ENCODE measurements at regions of chr1 and their contacts with region 1.

Region 1: DNA sequence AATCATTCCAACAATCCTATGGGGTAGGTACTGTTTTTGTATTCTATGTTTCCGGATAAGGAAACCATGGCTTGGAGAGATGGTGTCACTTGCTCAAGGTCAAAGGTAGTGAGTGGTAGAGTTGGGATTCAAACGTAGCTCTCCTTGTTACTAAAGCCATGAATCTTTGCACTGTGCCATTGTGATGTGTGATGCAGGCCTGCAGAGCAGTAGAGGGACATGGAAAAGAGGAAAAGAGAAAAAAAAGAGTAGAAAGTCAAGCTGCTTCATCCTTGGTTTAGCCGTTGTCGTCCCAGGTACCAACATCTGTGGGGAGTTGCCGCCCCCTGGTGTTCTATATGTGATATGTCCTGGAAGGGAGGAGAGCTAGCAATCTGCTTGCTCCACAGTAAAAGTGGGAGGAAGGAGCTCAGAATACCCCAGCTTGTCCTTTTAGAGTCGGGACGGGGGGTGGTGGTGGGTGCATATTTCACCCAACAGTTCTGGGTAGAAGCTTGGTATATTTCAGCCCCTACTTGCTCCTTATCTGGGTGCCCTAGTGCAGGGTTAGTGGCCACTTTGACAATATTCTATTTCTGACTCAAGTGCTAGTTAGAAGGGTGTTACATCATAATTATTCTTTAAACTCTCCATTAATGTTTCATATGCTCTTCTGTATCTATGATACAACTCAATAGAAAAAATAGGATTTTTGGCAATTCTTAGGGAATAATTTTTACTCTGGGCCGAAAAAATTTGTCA is 98.4 kb downstream of the EBNA1BP2 start:
- DNase-seq: peak; percentile 84 to 90 (median 85)
- ATAC-seq: peak; percentile 94
- H3K4me3 ChIP-seq: no peak overlapping the region
- H3K27ac ChIP-seq: no peak overlapping the region; the same call in 2 of the 3 replicates
- H3K4me1 ChIP-seq: peaks cover 15 to 23% of the 10 kb centered on the region in 2 experiments; a peak in 4 of 5 replicates
- H3K27me3 ChIP-seq: no peaks in the 10 kb centered on the region
- CTCF ChIP-seq: peak; percentile 90 to 96 (median 94)
- EP300 ChIP-seq: no peak
- POLR2A ChIP-seq: no peak
- RAD21 ChIP-seq: peak; percentile 99 to 100

Region 2: GRCh38 chr1:42518908-42519307 is 554.8 kb before region 1 on chr1:
- CTCF ChIA-PET with region 1: no interaction called
- POLR2A ChIA-PET with region 1: no interaction called
- in situ Hi-C with region 1: no loop called
- intact Hi-C with region 1: loop called (anchors 10 kb)
- DNase-seq: no peak
- ATAC-seq: no peak
- H3K4me3 ChIP-seq: no peak overlapping the region
- H3K27ac ChIP-seq: no peak overlapping the region
- H3K4me1 ChIP-seq: no peaks in the 10 kb centered on the region
- H3K27me3 ChIP-seq: no peaks in the 10 kb centered on the region
- CTCF ChIP-seq: no peak
- EP300 ChIP-seq: no peak
- POLR2A ChIP-seq: no peak
- RAD21 ChIP-seq: no peak

Region 3: DNA sequence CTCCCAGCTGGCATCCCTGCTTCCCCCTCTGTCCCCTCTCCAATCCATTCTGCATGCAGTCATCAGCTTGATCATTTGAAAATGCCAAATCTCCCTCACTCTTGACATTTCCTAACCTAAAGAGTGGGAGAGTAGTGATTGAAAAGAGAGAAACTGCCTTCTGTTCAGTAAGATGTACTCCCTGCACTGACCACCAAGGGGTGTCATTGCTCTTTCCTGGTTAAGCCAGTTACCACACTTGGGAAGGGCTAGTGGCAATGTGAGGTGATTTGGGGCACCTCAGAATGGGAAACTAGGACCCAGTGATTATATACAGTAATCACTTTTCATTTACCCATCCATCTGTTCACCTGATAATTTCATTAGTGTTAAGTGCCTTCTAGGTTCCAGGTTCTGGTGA is 295.8 kb before region 1 on chr1:
- CTCF ChIA-PET with region 1: interaction called, 65 read pairs
- POLR2A ChIA-PET with region 1: interaction called, 27 read pairs
- in situ Hi-C with region 1: loop called (anchors 5 kb)
- intact Hi-C with region 1: loop called (anchors 1 kb)
- DNase-seq: peak; percentile 75 to 80 (median 76)
- ATAC-seq: peak; percentile 94
- H3K4me3 ChIP-seq: no peak overlapping the region
- H3K27ac ChIP-seq: no peak overlapping the region
- H3K4me1 ChIP-seq: no peaks in the 10 kb centered on the region; a peak in 1 of 5 replicates
- H3K27me3 ChIP-seq: no peaks in the 10 kb centered on the region
- CTCF ChIP-seq: peak; percentile 84 to 94 (median 94)
- EP300 ChIP-seq: no peak
- POLR2A ChIP-seq: no peak
- RAD21 ChIP-seq: peak; percentile 92 to 97

Region 4: GRCh38 chr1:42913426-42914091 is 160.1 kb before region 1 on chr1:
- CTCF ChIA-PET with region 1: interaction called, 35 read pairs
- POLR2A ChIA-PET with region 1: interaction called, 10 read pairs
- in situ Hi-C with region 1: no loop called
- intact Hi-C with region 1: loop called (anchors 1 kb)
- DNase-seq: peak; percentile 66 to 86 (median 69)
- ATAC-seq: peak; percentile 96
- H3K4me3 ChIP-seq: no peak overlapping the region
- H3K27ac ChIP-seq: no peak overlapping the region
- H3K4me1 ChIP-seq: peaks cover 0 to 7% of the 10 kb centered on the region in 2 experiments; a peak in 1 of 5 replicates
- H3K27me3 ChIP-seq: no peaks in the 10 kb centered on the region
- CTCF ChIP-seq: peak; percentile 67 to 85 (median 83)
- EP300 ChIP-seq: no peak
- POLR2A ChIP-seq: no peak
- RAD21 ChIP-seq: peak; percentile 83 to 99

Region 5: DNA sequence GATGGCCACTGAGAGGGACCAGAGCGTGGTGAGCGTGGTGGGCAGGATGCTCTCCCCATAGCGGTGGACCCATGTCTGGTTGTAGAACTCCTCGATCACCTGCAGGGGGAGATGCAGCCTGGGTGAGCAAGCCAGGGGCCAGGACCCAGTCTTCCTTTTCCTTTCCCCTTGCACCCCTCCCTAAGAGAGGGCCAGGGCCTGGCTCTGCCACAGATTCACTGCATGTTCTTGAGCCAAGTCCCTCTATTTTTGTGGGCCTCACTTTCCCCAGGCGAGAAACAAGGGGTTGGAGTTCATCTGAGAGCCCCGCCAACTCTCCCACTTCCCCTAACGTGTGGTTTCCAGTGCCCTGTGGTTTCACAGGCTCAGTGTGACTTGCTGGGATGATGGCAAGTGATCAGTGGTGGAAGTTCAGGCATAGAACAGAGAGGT is 142.5 kb before region 1 on chr1:
- CTCF ChIA-PET with region 1: interaction called, 32 read pairs
- POLR2A ChIA-PET with region 1: interaction called, 12 read pairs
- in situ Hi-C with region 1: no loop called
- intact Hi-C with region 1: no loop called
- DNase-seq: peak; percentile 76 to 83 (median 76)
- ATAC-seq: peak; percentile 85
- H3K4me3 ChIP-seq: no peak overlapping the region
- H3K27ac ChIP-seq: peak overlapping the region; percentile 53; the same call in 1 of the 3 replicates
- H3K4me1 ChIP-seq: peaks cover 60 to 79% of the 10 kb centered on the region in 2 experiments
- H3K27me3 ChIP-seq: no peaks in the 10 kb centered on the region
- CTCF ChIP-seq: peak; percentile 71 to 81 (median 80)
- EP300 ChIP-seq: no peak
- POLR2A ChIP-seq: no peak
- RAD21 ChIP-seq: peak; percentile 59 to 89

Region 6: DNA sequence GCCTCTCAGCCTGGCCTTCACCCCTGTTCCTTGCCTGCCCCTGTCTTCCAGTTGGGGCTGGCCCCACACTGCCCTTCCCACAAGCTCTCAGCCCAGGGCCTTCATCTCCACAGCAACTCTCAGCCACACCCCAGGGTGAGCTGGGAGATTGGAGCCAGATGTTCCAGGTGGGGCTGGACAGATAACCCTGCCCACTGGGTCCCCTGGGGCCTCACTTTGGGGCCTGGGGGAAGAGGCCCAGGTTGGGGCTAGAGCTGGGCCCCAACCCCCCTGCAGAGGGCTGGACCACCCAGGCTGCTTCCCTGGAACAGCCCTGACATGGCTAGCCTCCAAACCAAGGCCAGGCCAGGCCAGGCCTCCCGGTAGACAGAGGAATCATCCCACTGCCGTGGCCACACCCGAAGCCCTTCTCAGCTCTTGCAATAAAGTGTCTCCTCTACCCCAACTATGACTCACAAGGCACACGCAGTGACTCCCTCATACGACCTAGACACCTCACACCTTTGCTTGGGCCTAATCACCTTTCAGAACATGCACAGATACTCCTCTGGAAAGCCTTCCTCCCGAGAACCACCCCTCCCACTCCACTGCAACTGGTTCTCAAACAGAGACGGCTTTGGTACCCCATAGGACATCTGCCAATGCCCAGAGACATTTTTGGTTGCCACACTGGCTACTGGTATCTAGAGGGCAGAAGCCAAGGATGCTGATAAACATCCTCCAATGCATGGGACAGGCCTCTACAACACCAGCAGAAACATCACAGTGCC is 137.2 kb before region 1 on chr1:
- CTCF ChIA-PET with region 1: interaction called, 32 read pairs
- POLR2A ChIA-PET with region 1: interaction called, 12 read pairs
- in situ Hi-C with region 1: no loop called
- intact Hi-C with region 1: no loop called
- DNase-seq: peak; percentile 93 to 98 (median 95)
- ATAC-seq: peak; percentile 89
- H3K4me3 ChIP-seq: no peak overlapping the region
- H3K27ac ChIP-seq: peak overlapping the region; percentile 74
- H3K4me1 ChIP-seq: peaks cover 96% of the 10 kb centered on the region in 2 experiments
- H3K27me3 ChIP-seq: no peaks in the 10 kb centered on the region
- CTCF ChIP-seq: no peak
- EP300 ChIP-seq: peak; percentile 94
- POLR2A ChIP-seq: 0 out of 2 replicates have a peak, but pooled peaks have one; percentile 5
- RAD21 ChIP-seq: peak in 1 of 2 experiments; percentile 33; a peak in 1 of 4 replicates

Region 7: GRCh38 chr1:43460988-43461693 is 387.5 kb after region 1 on chr1:
- CTCF ChIA-PET with region 1: no interaction called
- POLR2A ChIA-PET with region 1: no interaction called
- in situ Hi-C with region 1: no loop called
- intact Hi-C with region 1: no loop called
- DNase-seq: no peak
- ATAC-seq: peak; percentile 26; the same call in 1 of the 3 replicates
- H3K4me3 ChIP-seq: no peak overlapping the region
- H3K27ac ChIP-seq: no peak overlapping the region
- H3K4me1 ChIP-seq: no peaks in the 10 kb centered on the region
- H3K27me3 ChIP-seq: peaks cover 11 to 17% of the 10 kb centered on the region in 2 experiments; a peak in 4 of 5 replicates
- CTCF ChIP-seq: no peak
- EP300 ChIP-seq: no peak
- POLR2A ChIP-seq: no peak
- RAD21 ChIP-seq: no peak

Region 8: GRCh38 chr1:43639976-43640789 is 566.5 kb after region 1 on chr1:
- CTCF ChIA-PET with region 1: no interaction called
- POLR2A ChIA-PET with region 1: no interaction called
- in situ Hi-C with region 1: no loop called
- intact Hi-C with region 1: no loop called
- DNase-seq: peak in 1 of 4 experiments; percentile 0
- ATAC-seq: peak; percentile 47; the same call in 1 of the 3 replicates
- H3K4me3 ChIP-seq: no peak overlapping the region
- H3K27ac ChIP-seq: no peak overlapping the region
- H3K4me1 ChIP-seq: no peaks in the 10 kb centered on the region
- H3K27me3 ChIP-seq: peaks cover 28 to 40% of the 10 kb centered on the region in 2 experiments
- CTCF ChIP-seq: no peak; a peak in 1 of 6 replicates
- EP300 ChIP-seq: no peak
- POLR2A ChIP-seq: no peak
- RAD21 ChIP-seq: peak in 1 of 2 experiments; percentile 21; a peak in 2 of 4 replicates